Dendritic cell treated with granulocyte-macrophage colony-stimulating factor and Interleukin-4, amounts not matched to agents 40 ng/mL and 50 ng/mL, for 4 days (primary cell): ENCODE measurements at regions of chr14 and their contacts with region 1.

Region 1: DNA sequence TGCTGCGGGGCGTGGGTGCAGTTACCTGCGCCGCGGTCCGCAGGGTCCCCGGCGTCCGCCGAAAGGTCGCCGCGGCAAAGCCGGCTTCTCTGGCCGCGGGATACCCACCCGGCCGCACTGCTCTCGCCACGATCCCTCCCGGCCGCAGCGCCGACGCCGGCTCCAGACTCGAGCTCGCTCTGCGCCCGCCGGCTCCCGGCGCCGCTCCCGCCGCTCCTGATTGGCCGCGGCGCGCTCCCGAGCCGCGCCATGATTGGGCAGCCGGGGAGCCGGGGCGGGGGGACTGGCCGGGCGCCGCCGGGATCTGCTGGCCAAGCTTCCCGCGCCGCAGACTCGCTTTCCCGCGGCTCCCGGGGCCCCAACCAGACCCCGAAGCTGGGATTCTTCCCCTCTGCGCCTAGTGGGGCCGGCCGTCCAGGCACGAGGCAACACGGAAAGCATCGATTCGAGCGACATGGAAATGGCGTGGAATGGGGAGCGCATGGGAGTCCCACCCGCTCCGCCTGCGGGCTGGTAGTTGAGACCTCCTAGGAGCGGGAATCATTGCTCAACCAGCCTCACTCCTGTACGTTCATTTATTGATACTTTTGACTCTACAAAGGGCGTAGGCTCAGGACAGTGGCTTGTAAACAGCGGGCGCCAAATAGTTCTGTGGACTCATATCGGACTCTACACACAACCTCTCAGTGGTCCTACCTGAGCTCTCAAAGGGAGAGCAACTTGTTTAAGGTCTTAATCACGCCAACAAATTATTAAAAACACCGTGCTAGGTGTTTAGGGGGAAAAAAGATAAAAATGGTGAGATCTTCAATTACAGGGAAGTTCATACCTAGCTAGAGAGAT is 36.4 kb upstream of the STON2 start:
- H3K4me3 Mint-ChIP-seq: peak overlapping the region; percentile 69
- H3K27ac Mint-ChIP-seq: no peak overlapping the region
- H3K4me1 Mint-ChIP-seq: peaks cover 37% of the 10 kb centered on the region
- H3K27me3 Mint-ChIP-seq: peaks cover 91% of the 10 kb centered on the region

Region 2: GRCh38 chr14:81384900-81385299 is 51.6 kb before region 1 on chr14:
- intact Hi-C with region 1: loop called (anchors 10 kb)
- H3K4me3 Mint-ChIP-seq: no peak overlapping the region
- H3K27ac Mint-ChIP-seq: no peak overlapping the region
- H3K4me1 Mint-ChIP-seq: peaks cover 7% of the 10 kb centered on the region
- H3K27me3 Mint-ChIP-seq: peaks cover 36% of the 10 kb centered on the region

Region 3: DNA sequence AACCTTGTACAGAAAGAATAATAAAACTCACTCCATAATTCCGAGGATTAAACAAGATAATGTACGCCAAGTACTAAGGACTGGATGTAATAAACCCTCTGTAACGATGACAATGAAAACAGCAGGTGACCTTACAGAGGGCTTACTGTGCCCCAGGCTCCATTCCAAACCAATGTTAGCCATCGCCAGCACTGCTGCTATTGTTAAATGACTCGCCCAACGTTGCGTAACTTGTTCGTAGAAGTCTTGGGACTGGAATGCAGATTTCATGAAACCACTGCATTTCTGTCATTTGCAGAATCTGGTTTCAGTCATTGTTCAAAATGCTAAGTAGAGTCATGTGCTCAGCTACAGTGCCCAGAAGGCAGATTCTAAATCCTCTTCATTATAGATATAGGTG is 35.7 kb before region 1 on chr14:
- intact Hi-C with region 1: loop called (anchors 5 kb)
- H3K4me3 Mint-ChIP-seq: no peak overlapping the region
- H3K27ac Mint-ChIP-seq: peak overlapping the region; percentile 88
- H3K4me1 Mint-ChIP-seq: peaks cover 47% of the 10 kb centered on the region
- H3K27me3 Mint-ChIP-seq: peaks cover 60% of the 10 kb centered on the region

Region 4: DNA sequence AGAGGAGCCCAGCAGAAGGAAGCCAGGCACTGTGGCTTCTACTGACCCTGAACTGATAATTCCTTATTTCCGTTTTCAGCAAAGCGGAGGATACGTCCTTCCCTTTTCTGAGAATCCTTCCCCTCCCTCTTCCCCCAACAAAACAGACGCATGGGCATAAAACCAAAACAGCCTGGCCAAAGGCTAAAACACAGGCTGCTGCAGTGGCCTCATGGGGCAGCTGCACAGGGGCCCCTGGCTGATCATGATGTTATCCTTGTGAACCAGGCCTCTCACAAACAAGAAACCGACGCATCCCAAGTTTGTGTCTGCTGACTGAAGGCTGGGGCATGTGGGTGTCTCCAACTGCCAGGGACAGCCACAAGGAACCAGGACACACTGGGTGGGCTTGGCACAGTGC is 13.0 kb before region 1 on chr14:
- intact Hi-C with region 1: loop called (anchors 2 kb)
- H3K4me3 Mint-ChIP-seq: no peak overlapping the region
- H3K27ac Mint-ChIP-seq: peak overlapping the region; percentile 80
- H3K4me1 Mint-ChIP-seq: peaks cover 75% of the 10 kb centered on the region
- H3K27me3 Mint-ChIP-seq: peaks cover 38% of the 10 kb centered on the region

Region 5: DNA sequence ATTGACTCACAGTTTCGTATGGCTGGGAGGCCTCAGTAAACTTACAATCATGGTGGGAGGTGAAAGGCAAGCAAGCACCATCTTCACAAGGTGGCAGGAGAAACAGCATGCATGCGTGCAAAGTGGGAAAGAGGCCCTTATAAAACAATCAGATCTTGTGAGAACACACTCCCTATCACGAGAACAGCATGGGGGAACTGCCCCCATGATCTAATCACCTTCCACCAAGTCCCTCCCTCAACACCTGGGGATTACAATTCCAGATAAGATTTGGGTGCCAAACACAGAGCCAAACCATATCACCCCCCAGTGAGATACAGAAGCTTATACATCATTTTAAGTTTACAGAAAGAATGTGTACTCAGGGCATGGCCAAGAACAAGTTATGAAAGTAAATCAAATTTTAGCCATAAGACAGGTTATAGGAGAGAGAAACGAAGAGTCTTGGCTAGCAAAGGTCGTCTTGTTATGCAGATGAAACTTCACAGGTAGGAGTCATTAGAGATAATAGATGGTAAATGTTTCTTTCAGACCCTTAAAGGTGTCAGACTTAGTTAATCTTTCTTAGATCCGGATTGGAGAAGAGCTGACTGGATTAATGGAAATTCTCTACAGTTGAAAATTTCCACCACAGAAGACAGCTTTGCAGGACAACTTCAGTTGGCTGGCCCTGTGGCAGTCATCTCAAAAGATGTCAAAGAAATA is 177.0 kb after region 1 on chr14:
- intact Hi-C with region 1: no loop called
- H3K4me3 Mint-ChIP-seq: no peak overlapping the region
- H3K27ac Mint-ChIP-seq: no peak overlapping the region
- H3K4me1 Mint-ChIP-seq: no peaks in the 10 kb centered on the region
- H3K27me3 Mint-ChIP-seq: no peaks in the 10 kb centered on the region